Motor neuron (in vitro differentiated cells): ENCODE measurements at regions of chr1 and their contacts with region 1.

Region 1: GRCh38 chr1:47432071-47433036 is 5.5 kb upstream of the FOXD2 start:
- ATAC-seq: peak; percentile 69 to 89 (median 82)
- H3K4me3 ChIP-seq: no peak overlapping the region
- H3K27ac ChIP-seq: no peak overlapping the region
- H3K4me1 ChIP-seq: peaks cover 2 to 18% of the 10 kb centered on the region in 2 donors

Region 2: GRCh38 chr1:47388891-47389238 is 43.5 kb before region 1 on chr1:
- in situ Hi-C with region 1: loop called in 1 of 9 experiments (anchors 5 kb)
- ATAC-seq: peak; percentile 67 to 96 (median 83)
- H3K4me3 ChIP-seq: no peak overlapping the region
- H3K27ac ChIP-seq: no peak overlapping the region
- H3K4me1 ChIP-seq: no peaks in the 10 kb centered on the region